Heart right ventricle (tissue), 16 donors: ENCODE measurements at regions of chr10 and their contacts with region 1.

Region 1: DNA sequence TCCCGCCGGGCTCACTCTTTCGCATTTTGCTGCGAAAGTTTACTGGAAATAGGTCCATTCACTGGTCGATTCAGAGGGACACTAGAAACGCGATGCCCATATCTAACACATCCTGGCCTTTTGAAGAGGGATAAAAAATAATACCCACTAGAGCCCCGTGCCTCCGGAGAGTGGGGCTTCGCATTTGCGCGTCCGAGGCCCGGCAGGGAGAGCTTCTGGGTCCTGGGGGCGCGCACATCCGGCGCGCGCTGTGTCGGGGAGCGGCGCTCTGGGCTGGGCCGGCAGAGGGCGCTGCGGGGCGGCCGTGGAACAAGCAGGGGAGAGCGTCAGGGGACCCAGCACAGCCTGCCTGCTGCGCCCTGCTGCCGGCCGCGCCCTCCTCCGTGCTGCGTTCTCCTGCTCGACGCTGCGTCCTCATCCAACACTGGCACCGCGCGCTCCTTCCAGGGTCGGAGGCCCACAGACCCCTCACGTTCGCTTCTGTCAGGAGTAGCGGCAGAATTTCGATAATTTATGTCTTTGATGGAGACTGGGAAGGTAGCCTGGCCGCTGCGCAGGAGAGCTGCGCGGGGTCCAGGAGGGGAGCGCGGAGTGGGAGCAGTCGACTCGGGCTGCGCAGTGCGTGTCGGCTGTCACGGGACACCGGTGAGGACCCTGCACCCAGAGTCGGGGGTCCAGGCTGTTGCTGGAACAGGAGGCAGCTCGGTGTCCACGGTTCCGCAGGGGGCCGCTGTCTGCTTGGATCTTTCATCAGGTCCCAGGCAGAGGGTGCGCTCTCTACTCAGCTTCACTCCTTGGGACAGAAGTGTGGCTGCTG is 41.5 kb upstream of the ZNF32 start:
- DNase-seq: peak; percentile 88 to 92
- ATAC-seq: peak; percentile 95 to 99 (median 98)
- H3K4me3 ChIP-seq: peak overlapping the region; percentile 39 to 77 (median 64)
- H3K27ac ChIP-seq: peak overlapping the region; percentile 66 to 99 (median 92)
- H3K4me1 ChIP-seq: peaks cover 3 to 69% (median 31%) of the 10 kb centered on the region in 9 donors
- H3K27me3 ChIP-seq: peaks cover 0 to 4% (median 0%) of the 10 kb centered on the region in 7 donors
- CTCF ChIP-seq: peak; percentile 74 to 92 (median 87)

Region 2: DNA sequence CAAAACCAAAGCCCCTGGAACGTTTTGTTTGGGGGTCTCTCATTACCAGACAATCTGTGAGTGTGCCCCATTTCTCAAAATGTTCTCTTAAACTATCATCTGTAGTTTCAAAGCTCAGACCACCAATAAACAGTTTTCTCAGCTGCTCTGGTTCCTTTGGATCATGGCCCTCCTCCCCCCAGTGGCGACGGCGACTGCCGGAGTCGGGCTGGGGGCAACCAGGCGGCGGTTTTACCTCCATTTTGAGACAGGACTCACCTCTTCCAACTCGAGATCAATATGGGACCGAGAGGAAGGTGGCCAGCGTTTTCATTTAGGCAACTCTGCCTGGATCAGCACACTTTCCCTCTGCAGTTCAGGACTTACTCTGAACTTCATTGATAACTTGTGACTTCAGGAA is 100.0 kb after region 1 on chr10:
- intact Hi-C with region 1: no loop called
- DNase-seq: no peak
- ATAC-seq: no peak
- H3K4me3 ChIP-seq: no peak overlapping the region
- H3K27ac ChIP-seq: peak overlapping the region in 1 of 10 donors; percentile 16
- H3K4me1 ChIP-seq: peaks cover 0 to 8% (median 0%) of the 10 kb centered on the region in 9 donors
- H3K27me3 ChIP-seq: no peaks in the 10 kb centered on the region
- CTCF ChIP-seq: no peak

Region 3: DNA sequence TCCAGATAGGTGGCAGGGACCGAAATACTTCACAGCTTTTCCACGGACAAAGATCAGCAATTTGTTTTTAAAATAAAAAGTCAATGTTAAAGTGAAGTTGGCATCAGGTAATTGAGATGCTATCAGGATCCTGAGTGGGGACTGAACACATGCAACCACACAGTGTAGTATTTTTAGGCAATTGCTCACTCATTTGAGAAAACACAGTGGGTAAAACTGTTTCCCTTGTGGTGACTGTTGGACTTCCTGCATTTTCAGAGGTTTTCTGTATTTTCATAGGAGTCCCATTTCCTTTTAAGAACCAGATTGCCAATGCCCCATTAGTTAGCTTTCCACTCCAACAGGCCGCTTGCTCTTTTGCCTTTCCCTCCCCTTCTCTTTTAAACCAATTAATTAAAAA is 118.0 kb after region 1 on chr10:
- intact Hi-C with region 1: loop called in 1 of 10 experiments (anchors 10 kb)
- DNase-seq: no peak
- ATAC-seq: no peak
- H3K4me3 ChIP-seq: no peak overlapping the region
- H3K27ac ChIP-seq: no peak overlapping the region
- H3K4me1 ChIP-seq: peaks cover 0 to 44% (median 14%) of the 10 kb centered on the region in 9 donors
- H3K27me3 ChIP-seq: no peaks in the 10 kb centered on the region
- CTCF ChIP-seq: no peak

Region 4: DNA sequence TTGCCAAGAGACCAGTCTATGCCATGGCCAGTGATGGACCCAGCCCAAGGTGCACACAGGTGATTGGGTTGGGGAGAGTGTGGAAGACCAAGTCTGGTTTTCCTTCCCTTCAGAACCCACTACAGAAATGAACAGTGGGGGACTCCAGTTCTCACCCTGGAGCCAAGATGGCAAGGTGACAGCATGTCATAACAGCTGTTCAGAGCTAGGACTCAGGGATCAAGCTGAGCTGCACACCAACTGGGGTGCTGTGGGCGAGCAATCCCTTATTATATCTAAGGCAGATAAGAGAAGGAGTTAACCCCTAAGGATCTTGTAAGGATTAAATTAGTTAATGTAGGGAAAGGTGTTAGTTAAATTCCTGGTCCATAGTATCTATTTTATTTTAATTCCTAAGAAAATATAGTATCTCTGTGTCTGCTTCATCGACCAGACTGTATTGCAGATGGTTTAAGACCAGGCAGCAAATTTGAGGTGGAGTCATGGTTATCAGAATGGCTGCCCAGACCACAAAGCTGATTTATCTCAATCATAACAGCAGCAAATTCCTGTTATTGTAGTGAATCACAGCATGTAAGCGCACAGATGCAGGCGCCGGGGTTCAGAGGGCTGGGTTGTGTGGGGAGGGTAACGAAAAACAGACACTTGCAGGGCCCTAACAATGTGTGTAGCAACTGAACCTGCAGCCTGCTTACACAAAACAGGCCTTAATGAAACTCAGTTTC is 167.2 kb after region 1 on chr10:
- intact Hi-C with region 1: loop called in 2 of 10 experiments (anchors 5 kb)
- DNase-seq: no peak
- ATAC-seq: peak in 1 of 8 donors; percentile 26
- H3K4me3 ChIP-seq: no peak overlapping the region
- H3K27ac ChIP-seq: peak overlapping the region in 3 of 10 donors; percentile 22 to 65 (median 57)
- H3K4me1 ChIP-seq: peaks cover 0 to 68% (median 22%) of the 10 kb centered on the region in 9 donors
- H3K27me3 ChIP-seq: no peaks in the 10 kb centered on the region
- CTCF ChIP-seq: no peak

Region 5: GRCh38 chr10:43888586-43888985 is 198.4 kb after region 1 on chr10:
- intact Hi-C with region 1: loop called in 1 of 10 experiments (anchors 10 kb)
- DNase-seq: no peak
- ATAC-seq: no peak
- H3K4me3 ChIP-seq: no peak overlapping the region
- H3K27ac ChIP-seq: peak overlapping the region in 2 of 10 donors; percentile 37 to 42
- H3K4me1 ChIP-seq: peaks cover 4 to 45% (median 13%) of the 10 kb centered on the region in 9 donors
- H3K27me3 ChIP-seq: no peaks in the 10 kb centered on the region
- CTCF ChIP-seq: no peak

Region 6: GRCh38 chr10:44010873-44011602 is 320.9 kb after region 1 on chr10:
- intact Hi-C with region 1: loop called in 1 of 10 experiments (anchors 10 kb)
- DNase-seq: peak in 1 of 2 donors; percentile 39
- ATAC-seq: peak in 7 of 8 donors; percentile 31 to 90 (median 75)
- H3K4me3 ChIP-seq: no peak overlapping the region
- H3K27ac ChIP-seq: peak overlapping the region in 6 of 10 donors; percentile 5 to 57 (median 18)
- H3K4me1 ChIP-seq: peaks cover 0 to 57% (median 38%) of the 10 kb centered on the region in 9 donors
- H3K27me3 ChIP-seq: no peaks in the 10 kb centered on the region
- CTCF ChIP-seq: no peak

Region 7: GRCh38 chr10:44132361-44133289 is 442.5 kb after region 1 on chr10:
- intact Hi-C with region 1: loop called in 1 of 10 experiments (anchors 10 kb)
- DNase-seq: peak in 1 of 2 donors; percentile 17
- ATAC-seq: peak; percentile 42 to 92 (median 72)
- H3K4me3 ChIP-seq: no peak overlapping the region
- H3K27ac ChIP-seq: peak overlapping the region in 1 of 10 donors; percentile 38
- H3K4me1 ChIP-seq: peaks cover 0 to 18% (median 4%) of the 10 kb centered on the region in 9 donors
- H3K27me3 ChIP-seq: no peaks in the 10 kb centered on the region
- CTCF ChIP-seq: no peak

Region 8: GRCh38 chr10:44864637-44865288 is 1174.6 kb after region 1 on chr10:
- intact Hi-C with region 1: loop called in 1 of 10 experiments (anchors 5 kb)
- DNase-seq: peak; percentile 91 to 95
- ATAC-seq: peak; percentile 92 to 98 (median 97)
- H3K4me3 ChIP-seq: peak overlapping the region; percentile 29 to 60 (median 54)
- H3K27ac ChIP-seq: peak overlapping the region; percentile 0 to 72 (median 63)
- H3K4me1 ChIP-seq: peaks cover 3 to 35% (median 16%) of the 10 kb centered on the region in 9 donors
- H3K27me3 ChIP-seq: peaks cover 0 to 30% (median 7%) of the 10 kb centered on the region in 7 donors
- CTCF ChIP-seq: peak; percentile 95 to 99 (median 98)